Dendritic cell treated with granulocyte-macrophage colony-stimulating factor and Interleukin-4, amounts not matched to agents 40 ng/mL and 50 ng/mL, for 4 days (primary cell): ENCODE measurements at regions of chr12 and their contacts with region 1.

Region 1: GRCh38 chr12:46300910-46301309 is 32.1 kb upstream of the SLC38A1 start:
- H3K4me3 Mint-ChIP-seq: no peak overlapping the region
- H3K27ac Mint-ChIP-seq: peak overlapping the region; percentile 39
- H3K4me1 Mint-ChIP-seq: peaks cover 56% of the 10 kb centered on the region
- H3K27me3 Mint-ChIP-seq: peaks cover 9% of the 10 kb centered on the region

Region 2: DNA sequence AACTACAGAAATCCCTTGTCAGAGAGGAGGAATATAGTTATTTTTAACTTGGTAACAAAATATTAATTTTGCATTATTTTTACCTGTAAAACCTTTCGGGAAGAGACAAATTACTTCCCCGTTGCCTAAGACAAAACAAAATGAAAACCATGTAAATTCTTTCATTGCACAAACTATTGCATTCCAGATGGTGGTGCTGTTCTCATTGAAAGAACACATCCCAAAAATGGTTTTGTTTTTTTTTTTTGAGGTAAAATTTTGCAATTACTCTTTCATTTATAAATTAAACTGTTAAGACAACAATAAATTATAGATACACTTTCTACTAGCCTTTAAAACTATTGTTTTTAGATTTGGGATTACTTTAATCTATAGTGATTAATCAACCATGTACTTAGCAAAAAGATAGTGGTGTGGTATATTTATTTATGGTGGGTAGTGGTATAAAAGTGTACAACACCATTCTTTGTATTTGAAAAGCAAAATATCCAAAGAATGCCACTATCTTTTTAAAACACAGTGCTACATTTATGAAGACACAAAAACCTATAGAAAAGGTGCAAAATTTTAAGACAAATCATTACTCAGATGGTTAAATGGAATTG is 147.5 kb before region 1 on chr12:
- intact Hi-C with region 1: loop called (anchors 2 kb)
- H3K4me3 Mint-ChIP-seq: no peak overlapping the region
- H3K27ac Mint-ChIP-seq: no peak overlapping the region
- H3K4me1 Mint-ChIP-seq: peaks cover 5% of the 10 kb centered on the region
- H3K27me3 Mint-ChIP-seq: peaks cover 3% of the 10 kb centered on the region

Region 3: GRCh38 chr12:46217541-46218321 is 83.2 kb before region 1 on chr12:
- intact Hi-C with region 1: loop called (anchors 2 kb)
- H3K4me3 Mint-ChIP-seq: no peak overlapping the region
- H3K27ac Mint-ChIP-seq: no peak overlapping the region
- H3K4me1 Mint-ChIP-seq: peaks cover 72% of the 10 kb centered on the region
- H3K27me3 Mint-ChIP-seq: peaks cover 60% of the 10 kb centered on the region

Region 4: GRCh38 chr12:46342562-46343033 is 41.7 kb after region 1 on chr12:
- intact Hi-C with region 1: no loop called
- H3K4me3 Mint-ChIP-seq: no peak overlapping the region
- H3K27ac Mint-ChIP-seq: no peak overlapping the region
- H3K4me1 Mint-ChIP-seq: no peaks in the 10 kb centered on the region
- H3K27me3 Mint-ChIP-seq: peaks cover 2% of the 10 kb centered on the region

Region 5: GRCh38 chr12:47317175-47317915 is 1016.4 kb after region 1 on chr12:
- intact Hi-C with region 1: no loop called
- H3K4me3 Mint-ChIP-seq: peak overlapping the region; percentile 56
- H3K27ac Mint-ChIP-seq: peak overlapping the region; percentile 89
- H3K4me1 Mint-ChIP-seq: peaks cover 65% of the 10 kb centered on the region
- H3K27me3 Mint-ChIP-seq: no peaks in the 10 kb centered on the region